ENCODE measurements at regions of chr1 and their contacts with region 1.

Region 1: GRCh38 chr1:119372490-119373086 is 4.0 kb downstream of the HAO2 start:
- H3K4me3 ChIP-seq: no peak overlapping the region
- H3K27ac ChIP-seq: no peak overlapping the region
- H3K4me1 ChIP-seq: peaks cover 8% of the 10 kb centered on the region
- CTCF ChIP-seq: peak; percentile 61

Region 2: DNA sequence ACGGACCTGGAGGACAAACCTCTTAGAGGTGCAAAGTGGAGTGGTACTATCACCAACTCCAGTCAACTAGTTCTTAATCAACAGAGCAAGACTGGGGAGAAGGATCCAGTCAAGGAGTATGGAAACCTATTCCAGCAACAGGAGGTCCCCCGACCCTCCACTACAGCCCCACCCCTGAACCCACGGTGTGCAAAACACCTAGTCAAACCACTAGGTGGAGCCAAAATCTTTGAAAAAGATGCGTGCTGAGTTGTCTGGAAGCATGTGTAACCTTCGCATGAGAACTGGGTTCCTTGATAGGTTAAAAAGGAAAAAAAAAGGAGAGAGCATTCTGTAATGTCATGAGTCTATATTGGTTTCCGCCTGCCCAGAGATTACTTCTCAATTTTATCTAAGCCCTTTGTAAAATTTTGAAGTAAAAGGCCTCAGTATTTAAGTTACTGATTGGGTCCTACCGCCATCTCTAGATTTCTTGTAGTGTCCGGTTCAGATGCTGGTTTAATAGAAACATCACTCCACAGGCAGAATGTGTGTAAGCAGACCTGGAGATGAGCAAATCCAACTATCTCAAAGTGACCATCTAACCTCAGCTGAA is 85.9 kb before region 1 on chr1:
- CTCF ChIA-PET with region 1: interaction called, 11 read pairs
- POLR2A ChIA-PET with region 1: no interaction called
- H3K4me3 ChIP-seq: no peak overlapping the region
- H3K27ac ChIP-seq: no peak overlapping the region
- H3K4me1 ChIP-seq: no peaks in the 10 kb centered on the region
- CTCF ChIP-seq: no peak

Region 3: DNA sequence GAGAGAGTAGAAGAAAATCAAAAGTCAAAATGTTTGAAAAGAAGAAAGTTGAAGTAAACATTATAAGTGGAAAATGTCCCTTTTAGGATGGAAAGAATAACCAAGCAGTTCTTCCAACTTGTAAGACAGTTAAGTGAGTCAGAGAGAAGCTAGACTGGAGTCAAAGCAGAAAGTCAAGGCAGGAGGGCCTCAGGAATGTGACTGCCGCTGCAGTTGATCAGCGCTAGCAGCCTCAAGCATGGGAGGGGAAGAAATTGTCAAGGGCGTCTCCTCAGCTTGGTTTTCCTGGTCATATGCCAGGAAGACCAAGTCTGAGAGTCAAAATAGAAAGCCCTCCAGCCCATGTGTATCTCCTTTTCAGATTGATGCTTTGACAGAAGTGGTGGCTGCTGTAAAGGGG is 19.2 kb after region 1 on chr1:
- CTCF ChIA-PET with region 1: no interaction called
- POLR2A ChIA-PET with region 1: no interaction called
- H3K4me3 ChIP-seq: no peak overlapping the region
- H3K27ac ChIP-seq: no peak overlapping the region
- H3K4me1 ChIP-seq: peaks cover 3% of the 10 kb centered on the region; the same call in 1 of the 2 replicates
- CTCF ChIP-seq: no peak

Region 4: GRCh38 chr1:119517112-119517511 is 144.5 kb after region 1 on chr1:
- CTCF ChIA-PET with region 1: no interaction called
- POLR2A ChIA-PET with region 1: no interaction called
- H3K4me3 ChIP-seq: no peak overlapping the region
- H3K27ac ChIP-seq: no peak overlapping the region
- H3K4me1 ChIP-seq: no peaks in the 10 kb centered on the region
- CTCF ChIP-seq: no peak